B cell (primary cell): ENCODE measurements at regions of chr5 and their contacts with region 1.

Region 1: DNA sequence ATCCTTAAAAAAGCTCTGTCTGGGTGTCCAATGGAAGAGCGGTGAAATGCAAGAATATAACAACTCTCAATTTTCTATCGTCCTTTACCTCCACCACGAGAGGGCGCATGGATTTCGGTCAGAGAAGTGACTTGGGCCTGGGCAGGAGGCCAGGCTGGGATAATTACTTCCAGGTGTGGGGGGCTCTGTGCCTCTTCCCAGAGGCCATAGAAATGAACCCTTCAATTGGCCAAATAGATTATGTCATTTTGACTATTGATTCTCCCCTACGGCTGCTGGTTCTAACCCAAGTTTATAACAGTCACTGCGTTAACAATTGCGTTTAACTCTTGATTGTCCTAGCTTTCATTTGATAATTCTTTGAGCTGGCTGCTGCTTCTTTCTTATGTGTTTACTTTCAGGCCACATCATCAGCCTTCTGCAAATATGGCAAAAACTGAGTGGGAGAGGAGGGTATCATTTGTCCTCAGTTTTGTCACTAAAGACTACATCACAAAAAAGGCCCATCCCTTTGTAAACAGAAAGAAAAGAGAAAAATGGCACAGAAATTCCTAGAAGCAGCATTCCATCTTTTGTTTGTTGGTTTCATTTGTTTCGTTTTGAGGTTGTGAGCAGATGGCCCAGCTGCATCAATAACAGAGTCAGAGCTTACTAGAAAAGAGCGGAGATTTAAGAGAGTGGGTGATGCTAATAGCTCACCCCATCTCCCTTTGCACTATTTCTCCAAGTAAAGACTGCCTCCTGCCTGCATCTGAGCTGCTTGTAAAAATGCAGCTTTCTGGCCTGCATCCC is 45.4 kb upstream of the ZFR start:
- DNase-seq: peak; percentile 81
- ATAC-seq: peak; percentile 71
- H3K4me3 ChIP-seq: no peak overlapping the region
- H3K4me3 Mint-ChIP-seq: no peak overlapping the region
- H3K27ac ChIP-seq: no peak overlapping the region
- H3K27ac Mint-ChIP-seq: peak overlapping the region; percentile 15
- H3K4me1 ChIP-seq: peaks cover 0 to 5% of the 10 kb centered on the region in 2 donors
- H3K4me1 Mint-ChIP-seq: peaks cover 6% of the 10 kb centered on the region
- H3K27me3 ChIP-seq: peaks cover 0 to 5% (median 0%) of the 10 kb centered on the region in 4 experiments
- H3K27me3 Mint-ChIP-seq: peaks cover 22% of the 10 kb centered on the region
- CTCF ChIP-seq: peak; percentile 84

Region 2: DNA sequence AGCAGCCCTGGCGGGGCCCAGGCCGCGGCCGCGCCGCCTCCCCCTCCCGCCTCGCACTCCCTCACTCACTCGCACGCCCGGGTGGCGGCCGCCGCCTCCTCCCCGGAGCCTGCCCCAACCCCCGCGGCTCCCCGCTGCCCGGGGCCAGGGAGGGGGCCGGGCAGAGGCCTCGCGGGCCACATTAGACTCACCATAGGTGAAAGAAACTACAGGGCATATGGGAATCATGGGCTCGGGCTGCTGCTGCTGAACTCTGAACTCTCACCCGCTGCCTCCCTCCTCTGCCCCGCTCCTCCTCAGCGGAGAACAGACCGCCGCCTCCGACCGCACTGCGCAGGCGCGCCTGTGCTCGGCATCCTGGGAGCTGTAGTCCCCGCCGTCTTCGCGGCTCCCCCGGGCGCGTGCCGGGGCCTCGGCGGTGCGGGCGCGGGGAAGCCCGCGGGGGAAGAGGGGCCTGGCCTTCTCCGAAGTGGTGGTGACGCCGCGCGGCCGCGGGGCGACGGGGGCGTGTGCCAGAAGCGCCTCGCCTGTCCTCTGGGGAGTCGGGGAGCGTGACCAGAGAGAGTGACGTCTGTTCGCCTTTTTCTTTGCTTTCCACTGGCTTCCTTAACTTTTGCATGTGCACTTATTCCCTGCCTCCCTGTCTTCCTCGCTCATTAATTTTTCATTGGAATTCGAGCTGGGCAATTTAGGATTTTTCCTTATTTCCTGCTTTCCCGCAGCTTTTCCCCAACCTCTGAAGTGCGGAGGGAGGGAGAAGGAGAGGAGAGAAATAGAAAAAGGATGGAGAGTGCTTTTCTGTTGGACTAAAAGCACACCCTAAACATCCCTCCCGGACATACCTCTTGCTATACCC is 45.3 kb before region 1 on chr5 and contains the start of gene ZFR:
- CTCF ChIA-PET with region 1: interaction called, 10 read pairs
- POLR2A ChIA-PET with region 1: no interaction called
- intact Hi-C with region 1: loop called (anchors 5 kb)
- DNase-seq: peak; percentile 94
- ATAC-seq: peak; percentile 80
- H3K4me3 ChIP-seq: peak within 1 kb of the TSS; percentile 55 to 91 (median 76)
- H3K4me3 Mint-ChIP-seq: peak within 1 kb of the TSS; percentile 93
- H3K27ac ChIP-seq: peak within 1 kb of the TSS; percentile 88 to 92
- H3K27ac Mint-ChIP-seq: peak within 1 kb of the TSS; percentile 96
- H3K4me1 ChIP-seq: peaks cover 36 to 42% of the 10 kb centered on the region in 2 donors
- H3K4me1 Mint-ChIP-seq: peaks cover 59% of the 10 kb centered on the region
- H3K27me3 ChIP-seq: no peaks in the 10 kb centered on the region
- H3K27me3 Mint-ChIP-seq: no peaks in the 10 kb centered on the region
- CTCF ChIP-seq: no peak
- total RNA-seq, gene ZFR: 69.0 and 74.6 TPM in 2 replicates

Region 3: DNA sequence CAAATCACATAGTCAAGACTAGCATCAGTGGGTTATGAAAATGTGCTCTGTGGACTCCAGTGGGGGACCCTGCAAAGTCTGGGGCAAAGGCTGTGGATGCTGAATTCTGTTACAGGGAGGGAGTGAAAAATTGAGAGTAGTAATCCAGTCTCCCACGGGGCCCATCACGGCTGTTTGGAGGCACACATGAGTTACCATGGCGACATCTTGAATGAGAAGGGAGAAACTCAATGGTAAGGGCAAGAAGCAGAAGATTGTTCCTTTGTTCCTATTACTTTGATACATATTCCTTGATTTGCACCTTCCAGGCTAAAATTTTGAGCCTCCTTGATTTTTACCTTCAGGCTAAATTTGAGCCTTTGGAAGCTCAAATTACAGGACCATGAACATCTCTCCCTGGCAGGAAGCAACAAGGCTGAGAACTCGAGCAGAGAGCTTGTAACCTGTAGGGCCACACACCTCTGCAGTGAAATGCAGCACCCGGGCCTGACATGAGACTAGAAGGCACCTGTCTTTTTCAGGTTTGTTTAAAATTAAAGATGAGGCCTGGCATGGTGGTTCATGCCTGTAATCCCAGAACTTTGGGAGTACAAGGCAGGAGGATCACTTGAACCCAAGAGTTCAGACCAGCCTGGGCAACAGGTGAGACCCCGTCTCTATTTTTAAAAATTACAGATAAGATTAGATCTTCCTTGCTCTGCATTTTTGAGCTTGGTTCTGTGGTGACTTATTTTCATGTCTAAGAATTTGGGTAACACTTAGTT is 14.5 kb before region 1 on chr5:
- CTCF ChIA-PET with region 1: interaction called, 10 read pairs
- POLR2A ChIA-PET with region 1: no interaction called
- intact Hi-C with region 1: no loop called
- DNase-seq: no peak
- ATAC-seq: no peak
- H3K4me3 ChIP-seq: no peak overlapping the region
- H3K4me3 Mint-ChIP-seq: no peak overlapping the region
- H3K27ac ChIP-seq: no peak overlapping the region
- H3K27ac Mint-ChIP-seq: no peak overlapping the region
- H3K4me1 ChIP-seq: no peaks in the 10 kb centered on the region
- H3K4me1 Mint-ChIP-seq: no peaks in the 10 kb centered on the region
- H3K27me3 ChIP-seq: no peaks in the 10 kb centered on the region
- H3K27me3 Mint-ChIP-seq: no peaks in the 10 kb centered on the region
- CTCF ChIP-seq: no peak

Region 4: GRCh38 chr5:32578363-32578762 is 88.4 kb after region 1 on chr5:
- CTCF ChIA-PET with region 1: interaction called, 74 read pairs
- POLR2A ChIA-PET with region 1: no interaction called
- intact Hi-C with region 1: no loop called
- DNase-seq: no peak
- ATAC-seq: no peak
- H3K4me3 ChIP-seq: no peak overlapping the region
- H3K4me3 Mint-ChIP-seq: no peak overlapping the region
- H3K27ac ChIP-seq: no peak overlapping the region
- H3K27ac Mint-ChIP-seq: no peak overlapping the region
- H3K4me1 ChIP-seq: peaks cover 49 to 59% of the 10 kb centered on the region in 2 donors
- H3K4me1 Mint-ChIP-seq: peaks cover 49% of the 10 kb centered on the region
- H3K27me3 ChIP-seq: no peaks in the 10 kb centered on the region
- H3K27me3 Mint-ChIP-seq: no peaks in the 10 kb centered on the region
- CTCF ChIP-seq: no peak

Region 5: GRCh38 chr5:32618962-32619361 is 129.0 kb after region 1 on chr5:
- CTCF ChIA-PET with region 1: interaction called, 57 read pairs
- POLR2A ChIA-PET with region 1: no interaction called
- intact Hi-C with region 1: no loop called
- DNase-seq: no peak
- ATAC-seq: no peak
- H3K4me3 ChIP-seq: no peak overlapping the region
- H3K4me3 Mint-ChIP-seq: no peak overlapping the region
- H3K27ac ChIP-seq: no peak overlapping the region
- H3K27ac Mint-ChIP-seq: no peak overlapping the region
- H3K4me1 ChIP-seq: no peaks in the 10 kb centered on the region
- H3K4me1 Mint-ChIP-seq: no peaks in the 10 kb centered on the region
- H3K27me3 ChIP-seq: no peaks in the 10 kb centered on the region
- H3K27me3 Mint-ChIP-seq: peaks cover 6% of the 10 kb centered on the region
- CTCF ChIP-seq: no peak